Vagina (tissue), 2 donors: ENCODE measurements at regions of chr1 and their contacts with region 1.

Region 1: DNA sequence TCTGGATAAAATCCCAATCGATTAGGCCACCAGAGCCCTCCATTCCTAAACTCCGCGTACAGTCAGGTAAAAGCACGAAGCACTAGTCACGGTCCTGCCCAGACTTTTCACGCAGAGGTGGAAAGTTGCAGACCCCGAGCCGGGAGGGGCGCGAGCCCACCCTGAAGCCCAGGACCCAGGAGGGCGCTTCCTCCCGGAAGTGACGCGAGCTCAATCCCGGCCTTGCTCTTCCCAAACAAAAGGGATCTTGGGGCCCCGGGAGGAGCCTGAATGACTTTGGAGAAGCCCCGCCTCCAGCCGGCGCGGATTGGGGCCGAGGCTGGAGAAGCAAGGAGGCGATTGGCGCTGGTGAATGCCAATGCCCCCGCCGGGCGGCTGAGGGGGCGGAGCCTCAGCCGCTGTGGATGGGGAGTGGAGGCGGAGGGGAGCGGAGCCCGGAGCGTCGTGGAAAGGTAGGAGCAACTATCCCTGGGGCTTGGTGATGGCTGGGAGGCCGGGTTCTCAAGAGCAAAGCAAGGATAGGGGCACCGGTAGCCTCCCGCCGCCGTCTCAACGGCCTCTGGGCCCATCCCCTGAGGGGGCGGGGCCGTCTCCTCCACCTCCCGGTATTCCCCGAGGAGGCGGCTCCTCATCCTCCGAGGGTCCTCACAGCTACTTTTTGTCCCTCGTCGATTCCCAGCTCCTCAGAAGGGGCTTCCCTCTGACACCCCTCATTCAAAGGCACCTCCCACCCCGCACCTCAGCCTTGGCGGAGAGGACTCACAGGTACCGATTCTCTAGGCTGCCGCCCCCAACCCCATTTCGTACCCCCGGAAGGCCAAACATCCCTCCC is at the start of gene CTTNBP2NL:
- DNase-seq: peak in 1 of 2 donors; percentile 97
- H3K4me3 ChIP-seq: peak within 1 kb of the TSS; percentile 87 to 95
- H3K27ac ChIP-seq: peak within 1 kb of the TSS; percentile 96
- H3K4me1 ChIP-seq: peaks cover 87% of the 10 kb centered on the region
- H3K27me3 ChIP-seq: no peaks in the 10 kb centered on the region
- CTCF ChIP-seq: no peak
- POLR2A ChIP-seq: peak in 1 of 2 donors; percentile 31
- total RNA-seq, gene CTTNBP2NL: 24.8 TPM

Region 2: GRCh38 chr1:112444269-112444668 is 48.2 kb after region 1 on chr1:
- intact Hi-C with region 1: no loop called
- DNase-seq: no peak
- H3K4me3 ChIP-seq: no peak overlapping the region
- H3K27ac ChIP-seq: no peak overlapping the region
- H3K4me1 ChIP-seq: peaks cover 23% of the 10 kb centered on the region
- H3K27me3 ChIP-seq: no peaks in the 10 kb centered on the region
- CTCF ChIP-seq: no peak
- POLR2A ChIP-seq: no peak

Region 3: DNA sequence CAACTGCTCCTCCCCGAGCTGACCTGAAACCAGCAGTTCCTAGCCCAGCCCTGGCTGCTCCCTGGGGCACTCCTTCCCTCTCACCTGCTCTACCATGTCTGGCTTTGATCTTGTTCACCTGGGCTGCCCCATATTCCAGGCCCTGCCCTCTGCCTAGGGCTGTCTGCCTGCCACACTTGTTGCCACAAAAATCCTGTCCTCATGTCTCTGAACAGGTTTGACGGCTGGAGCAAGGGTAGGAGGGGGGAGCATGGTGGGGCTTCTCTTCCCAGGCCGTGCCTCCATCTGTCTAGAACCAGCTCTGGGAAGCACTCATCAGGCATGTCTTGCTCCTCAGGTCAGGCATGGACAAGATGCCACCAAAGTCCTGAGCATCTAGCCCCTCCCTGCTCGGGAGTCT is 68.5 kb after region 1 on chr1:
- intact Hi-C with region 1: loop called (anchors 5 kb)
- DNase-seq: peak in 1 of 2 donors; percentile 91
- H3K4me3 ChIP-seq: no peak overlapping the region
- H3K27ac ChIP-seq: peak overlapping the region; percentile 81
- H3K4me1 ChIP-seq: peaks cover 68% of the 10 kb centered on the region
- H3K27me3 ChIP-seq: no peaks in the 10 kb centered on the region
- CTCF ChIP-seq: no peak
- POLR2A ChIP-seq: no peak

Region 4: GRCh38 chr1:112563341-112563740 is 167.3 kb after region 1 on chr1:
- intact Hi-C with region 1: no loop called
- DNase-seq: no peak
- H3K4me3 ChIP-seq: no peak overlapping the region
- H3K27ac ChIP-seq: no peak overlapping the region
- H3K4me1 ChIP-seq: no peaks in the 10 kb centered on the region
- H3K27me3 ChIP-seq: no peaks in the 10 kb centered on the region
- CTCF ChIP-seq: no peak
- POLR2A ChIP-seq: no peak

Region 5: GRCh38 chr1:112614460-112615065 is 218.5 kb after region 1 on chr1:
- intact Hi-C with region 1: no loop called
- DNase-seq: no peak
- H3K4me3 ChIP-seq: no peak overlapping the region
- H3K27ac ChIP-seq: no peak overlapping the region
- H3K4me1 ChIP-seq: peaks cover 29% of the 10 kb centered on the region
- H3K27me3 ChIP-seq: no peaks in the 10 kb centered on the region
- CTCF ChIP-seq: peak in 1 of 3 experiments; percentile 40
- POLR2A ChIP-seq: no peak

Region 6: GRCh38 chr1:112754116-112754628 is 358.1 kb after region 1 on chr1:
- intact Hi-C with region 1: no loop called
- DNase-seq: no peak
- H3K4me3 ChIP-seq: no peak overlapping the region
- H3K27ac ChIP-seq: no peak overlapping the region
- H3K4me1 ChIP-seq: no peaks in the 10 kb centered on the region
- H3K27me3 ChIP-seq: no peaks in the 10 kb centered on the region
- CTCF ChIP-seq: no peak
- POLR2A ChIP-seq: no peak